Activated T-helper 2 cell treated with anti-CD3 and anti-CD28 coated beads, Interferon-gamma antibody, Interleukin-2, Interleukin-4, amounts not matched to agents 10 μg/mL and 5 μg/mL and 100 μg/mL, durations not matched to agents 14 hours and 24 hours and 36 hours (primary cell): ENCODE measurements at regions of chr10 and their contacts with region 1.

Region 1: GRCh38 chr10:14700546-14701123 is 74.1 kb downstream of the FAM107B start:
- DNase-seq: no peak
- H3K4me3 Mint-ChIP-seq: no peak overlapping the region
- H3K27ac Mint-ChIP-seq: no peak overlapping the region
- H3K4me1 Mint-ChIP-seq: peaks cover 3% of the 10 kb centered on the region
- H3K27me3 Mint-ChIP-seq: peaks cover 4% of the 10 kb centered on the region

Region 2: DNA sequence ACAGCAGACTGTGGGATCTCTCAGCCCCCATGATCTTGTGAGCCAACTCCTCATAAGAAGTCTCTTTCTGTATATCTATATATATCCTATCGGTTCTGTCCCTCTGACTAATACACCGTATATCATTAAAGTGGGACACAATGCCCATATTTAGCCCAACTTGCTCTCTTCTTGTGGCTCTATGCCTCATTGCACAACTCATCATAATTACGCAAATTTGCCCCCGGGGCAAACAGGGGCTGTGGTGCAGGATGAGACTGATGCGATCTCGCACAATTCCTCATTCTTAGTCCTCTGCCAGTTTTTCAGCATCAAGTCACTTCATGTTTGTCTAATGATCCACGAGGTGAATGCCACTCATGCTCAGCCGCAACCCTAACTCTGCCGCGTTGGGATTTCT is 930.7 kb before region 1 on chr10:
- intact Hi-C with region 1: no loop called
- DNase-seq: no peak
- H3K4me3 Mint-ChIP-seq: no peak overlapping the region
- H3K27ac Mint-ChIP-seq: no peak overlapping the region
- H3K4me1 Mint-ChIP-seq: no peaks in the 10 kb centered on the region
- H3K27me3 Mint-ChIP-seq: peaks cover 12% of the 10 kb centered on the region

Region 3: GRCh38 chr10:14635043-14635710 is 65.5 kb before region 1 on chr10:
- intact Hi-C with region 1: loop called (anchors 2 kb)
- DNase-seq: no peak
- H3K4me3 Mint-ChIP-seq: no peak overlapping the region
- H3K27ac Mint-ChIP-seq: no peak overlapping the region
- H3K4me1 Mint-ChIP-seq: peaks cover 2% of the 10 kb centered on the region
- H3K27me3 Mint-ChIP-seq: peaks cover 2% of the 10 kb centered on the region